AG04449 (cell line): ENCODE measurements at regions of chr17 and their contacts with region 1.

Region 1: DNA sequence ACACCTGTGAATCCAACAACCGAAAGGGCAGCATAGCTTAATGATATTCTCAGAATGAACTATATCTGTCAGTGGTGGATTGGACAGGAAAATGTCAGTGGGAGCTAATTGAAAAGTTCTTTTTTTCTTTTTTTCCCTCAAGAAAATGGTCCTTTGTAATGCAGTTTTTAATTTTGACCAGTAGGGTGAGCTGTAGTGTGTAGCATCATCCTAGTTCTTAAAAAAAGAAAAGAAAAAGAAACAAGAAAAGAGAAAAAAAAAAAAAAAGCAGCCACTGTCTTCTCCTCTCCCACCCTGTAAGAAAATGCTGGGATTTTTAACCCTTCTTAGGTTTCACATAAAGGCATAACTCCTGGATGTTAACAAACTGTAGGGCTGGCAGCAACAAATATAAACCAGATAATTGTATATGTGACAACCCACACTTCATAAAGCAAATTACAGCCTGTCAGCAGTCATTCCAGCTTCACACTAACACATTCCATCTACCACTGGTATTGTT is 78.1 kb downstream of the SKAP1 start:
- DNase-seq: no peak
- H3K4me3 ChIP-seq: no peak overlapping the region
- CTCF ChIP-seq: peak; percentile 27

Region 2: GRCh38 chr17:48215583-48216139 is 136.2 kb before region 1 on chr17:
- CTCF ChIA-PET with region 1: interaction called, 12 read pairs
- POLR2A ChIA-PET with region 1: no interaction called
- DNase-seq: no peak
- H3K4me3 ChIP-seq: no peak overlapping the region
- CTCF ChIP-seq: peak; percentile 57

Region 3: GRCh38 chr17:48363161-48363560 is 11.3 kb after region 1 on chr17:
- CTCF ChIA-PET with region 1: interaction called, 22 read pairs
- POLR2A ChIA-PET with region 1: no interaction called
- DNase-seq: no peak
- H3K4me3 ChIP-seq: no peak overlapping the region
- CTCF ChIP-seq: no peak

Region 4: GRCh38 chr17:48530887-48531272 is 179.0 kb after region 1 on chr17 and contains the start of gene HOXB1:
- CTCF ChIA-PET with region 1: no interaction called
- POLR2A ChIA-PET with region 1: no interaction called
- DNase-seq: no peak
- H3K4me3 ChIP-seq: no peak within 1 kb of the TSS
- CTCF ChIP-seq: no peak

Region 5: DNA sequence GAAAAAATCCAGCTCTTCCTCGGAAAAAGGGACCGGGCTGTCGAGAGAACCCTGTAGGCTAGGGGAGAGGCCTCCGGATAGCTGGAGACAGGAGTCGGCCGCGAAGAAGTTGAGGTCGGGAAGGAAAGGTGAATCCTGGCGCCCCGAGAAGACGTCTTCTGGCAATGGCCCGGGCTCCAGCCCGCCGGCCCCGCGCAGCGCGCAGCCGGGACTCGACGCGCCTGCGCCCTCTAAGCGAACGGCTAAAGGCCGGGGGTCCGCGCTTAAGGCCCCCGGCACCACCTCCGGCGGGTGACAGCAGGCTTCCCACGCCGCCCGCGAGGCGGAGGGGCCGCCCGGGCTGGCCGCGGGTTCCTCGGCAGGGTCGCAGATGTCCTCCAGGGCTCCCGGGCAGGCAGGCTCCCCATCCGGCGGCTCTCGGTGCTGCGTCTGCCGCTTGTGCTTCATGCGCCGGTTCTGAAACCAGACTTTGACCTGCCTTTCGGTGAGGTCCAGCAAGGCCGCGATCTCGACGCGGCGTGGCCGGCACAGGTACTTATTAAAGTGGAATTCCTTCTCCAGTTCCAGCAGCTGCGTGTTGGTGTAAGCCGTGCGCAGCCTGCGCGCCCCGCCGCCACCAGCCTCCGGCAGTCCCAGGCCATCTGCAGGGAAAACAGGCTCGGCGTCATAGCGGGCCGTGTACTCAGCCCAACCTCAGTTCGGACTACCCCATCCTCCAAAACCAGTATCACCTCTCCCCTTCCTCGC is 191.4 kb after region 1 on chr17:
- CTCF ChIA-PET with region 1: interaction called, 23 read pairs
- POLR2A ChIA-PET with region 1: no interaction called
- DNase-seq: no peak
- H3K4me3 ChIP-seq: peak overlapping the region; percentile 84
- CTCF ChIP-seq: no peak

Region 6: GRCh38 chr17:48586355-48587258 is 234.7 kb after region 1 on chr17:
- CTCF ChIA-PET with region 1: interaction called, 80 read pairs
- POLR2A ChIA-PET with region 1: interaction called, 4 read pairs
- DNase-seq: no peak
- H3K4me3 ChIP-seq: peak overlapping the region; percentile 76
- CTCF ChIP-seq: no peak

Region 7: GRCh38 chr17:48618256-48618897 is 266.5 kb after region 1 on chr17:
- CTCF ChIA-PET with region 1: interaction called, 35 read pairs
- POLR2A ChIA-PET with region 1: no interaction called
- DNase-seq: no peak
- H3K4me3 ChIP-seq: peak overlapping the region; percentile 29
- CTCF ChIP-seq: peak; percentile 88